Posterior vena cava (tissue), 2 donors: ENCODE measurements at regions of chr7 and their contacts with region 1.

Region 1: DNA sequence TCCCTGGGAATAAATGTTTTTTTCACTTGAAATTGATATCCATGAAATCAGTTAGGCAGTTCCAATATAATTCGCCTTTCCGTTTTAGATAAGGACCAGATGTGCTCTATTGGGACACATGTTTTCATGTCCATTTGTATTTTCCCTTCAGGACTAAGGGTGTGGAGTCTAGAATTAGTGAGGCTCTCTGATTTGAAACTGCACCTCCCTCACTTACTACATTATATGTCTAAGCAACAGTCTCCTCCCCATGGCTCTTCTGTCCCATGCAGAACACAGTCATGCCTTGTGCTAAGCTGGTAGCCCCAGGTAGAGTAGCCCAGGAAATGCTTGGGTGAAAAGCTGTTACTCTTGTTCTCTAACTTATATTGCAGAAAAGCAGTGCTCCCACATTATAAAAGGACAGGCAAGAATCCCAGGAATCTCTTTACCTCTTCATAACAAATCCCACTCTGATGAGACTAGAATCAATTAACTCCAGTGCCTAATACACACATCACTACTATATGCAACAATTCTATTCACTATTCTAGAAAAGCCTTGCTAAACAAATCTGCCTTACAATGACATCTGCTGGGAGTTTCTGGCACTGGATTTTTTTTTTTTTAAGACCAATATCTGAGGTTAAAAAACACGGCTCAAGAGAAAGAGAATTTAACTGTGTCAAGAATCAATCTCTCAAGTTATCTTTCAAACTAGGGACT is 293.9 kb downstream of the SNX13 start:
- DNase-seq: no peak

Region 2: DNA sequence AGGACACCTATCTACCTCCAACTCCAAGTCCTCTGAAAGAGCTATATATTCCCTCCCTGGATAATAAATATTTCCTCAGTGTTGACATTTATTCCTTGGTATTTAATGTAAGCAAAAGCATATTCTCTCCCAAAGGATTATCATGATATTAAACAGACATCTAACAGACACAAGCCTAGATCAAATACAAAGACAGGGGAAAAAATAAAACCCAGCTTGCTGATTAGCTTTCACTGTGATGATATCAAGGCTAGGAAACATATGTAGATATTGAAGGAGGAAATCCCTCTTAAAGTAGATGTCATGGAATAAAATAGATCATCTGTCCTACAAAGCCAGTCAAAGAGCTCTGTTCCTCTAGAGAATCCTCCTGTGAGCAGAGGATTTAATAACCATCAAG is 1320.3 kb before region 1 on chr7:
- intact Hi-C with region 1: loop called in 1 of 2 experiments (anchors 5 kb)
- DNase-seq: no peak

Region 3: GRCh38 chr7:16559497-16560179 is 1086.8 kb before region 1 on chr7:
- intact Hi-C with region 1: no loop called
- DNase-seq: no peak